PC-3 (cell line): ENCODE measurements at regions of chr4 and their contacts with region 1.

Region 1: GRCh38 chr4:44927399-44928380 is 201.3 kb upstream of the GNPDA2 start:
- DNase-seq: peak; percentile 57
- ATAC-seq: no peak
- H3K4me3 ChIP-seq: no peak overlapping the region
- H3K27ac ChIP-seq: no peak overlapping the region
- H3K4me1 ChIP-seq: peaks cover 2% of the 10 kb centered on the region; the same call in 1 of the 2 replicates
- H3K27me3 ChIP-seq: no peaks in the 10 kb centered on the region
- CTCF ChIP-seq: peak; percentile 66

Region 2: GRCh38 chr4:44760142-44760898 is 167.4 kb before region 1 on chr4:
- CTCF ChIA-PET with region 1: no interaction called
- POLR2A ChIA-PET with region 1: no interaction called
- intact Hi-C with region 1: loop called (anchors 2 kb)
- DNase-seq: peak; percentile 46
- ATAC-seq: peak; percentile 43
- H3K4me3 ChIP-seq: no peak overlapping the region
- H3K27ac ChIP-seq: no peak overlapping the region
- H3K4me1 ChIP-seq: no peaks in the 10 kb centered on the region
- H3K27me3 ChIP-seq: no peaks in the 10 kb centered on the region
- CTCF ChIP-seq: peak; percentile 63

Region 3: GRCh38 chr4:45331802-45332201 is 404.1 kb after region 1 on chr4:
- CTCF ChIA-PET with region 1: no interaction called
- POLR2A ChIA-PET with region 1: no interaction called
- intact Hi-C with region 1: loop called (anchors 5 kb)
- DNase-seq: no peak
- ATAC-seq: no peak
- H3K4me3 ChIP-seq: no peak overlapping the region
- H3K27ac ChIP-seq: no peak overlapping the region
- H3K4me1 ChIP-seq: no peaks in the 10 kb centered on the region
- H3K27me3 ChIP-seq: no peaks in the 10 kb centered on the region
- CTCF ChIP-seq: no peak

Region 4: GRCh38 chr4:45442466-45442865 is 514.8 kb after region 1 on chr4:
- CTCF ChIA-PET with region 1: no interaction called
- POLR2A ChIA-PET with region 1: no interaction called
- intact Hi-C with region 1: loop called (anchors 1 kb)
- DNase-seq: peak; percentile 46
- ATAC-seq: peak; percentile 65
- H3K4me3 ChIP-seq: no peak overlapping the region
- H3K27ac ChIP-seq: no peak overlapping the region
- H3K4me1 ChIP-seq: no peaks in the 10 kb centered on the region
- H3K27me3 ChIP-seq: no peaks in the 10 kb centered on the region
- CTCF ChIP-seq: peak; percentile 63

Region 5: GRCh38 chr4:45971108-45971507 is 1043.4 kb after region 1 on chr4:
- CTCF ChIA-PET with region 1: no interaction called
- POLR2A ChIA-PET with region 1: no interaction called
- intact Hi-C with region 1: loop called (anchors 5 kb)
- DNase-seq: peak; percentile 69
- ATAC-seq: peak; percentile 84
- H3K4me3 ChIP-seq: no peak overlapping the region
- H3K27ac ChIP-seq: no peak overlapping the region
- H3K4me1 ChIP-seq: no peaks in the 10 kb centered on the region
- H3K27me3 ChIP-seq: no peaks in the 10 kb centered on the region
- CTCF ChIP-seq: peak; percentile 42

Region 6: DNA sequence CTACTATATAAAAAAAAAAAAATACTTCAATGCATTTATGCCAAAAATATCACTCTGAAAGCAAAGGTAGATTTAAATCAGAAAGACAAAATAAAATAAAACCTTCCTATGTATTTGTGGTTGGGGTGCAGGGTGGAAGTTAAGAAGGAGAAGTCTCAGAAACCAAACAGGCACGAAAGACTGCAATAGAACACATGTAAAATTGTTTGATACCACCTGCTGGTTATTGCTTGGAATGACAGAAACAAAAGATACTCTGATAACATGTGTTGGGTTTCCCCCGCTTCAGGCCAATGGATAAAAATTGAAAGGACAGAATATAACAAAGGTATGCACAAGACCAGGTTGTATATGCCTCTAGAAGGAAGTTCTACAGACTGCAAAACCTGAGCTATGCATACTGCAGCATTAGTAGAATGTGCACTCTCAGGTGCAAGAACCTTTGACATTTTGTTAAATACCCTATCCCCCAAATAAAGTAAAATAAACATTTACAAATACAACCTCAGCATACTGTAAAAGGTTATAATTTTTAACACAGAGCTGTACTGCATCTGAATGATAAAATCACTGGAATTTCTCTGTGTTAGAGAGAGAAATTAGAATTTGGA is 1343.4 kb after region 1 on chr4:
- CTCF ChIA-PET with region 1: no interaction called
- POLR2A ChIA-PET with region 1: no interaction called
- intact Hi-C with region 1: loop called (anchors 5 kb)
- DNase-seq: peak; percentile 38
- ATAC-seq: no peak
- H3K4me3 ChIP-seq: no peak overlapping the region
- H3K27ac ChIP-seq: no peak overlapping the region
- H3K4me1 ChIP-seq: no peaks in the 10 kb centered on the region
- H3K27me3 ChIP-seq: no peaks in the 10 kb centered on the region
- CTCF ChIP-seq: peak; percentile 59